Colonic mucosa (tissue), 4 donors: ENCODE measurements at regions of chr5 and their contacts with region 1.

Region 1: GRCh38 chr5:168987543-168988300 is 313.2 kb downstream of the SLIT3 start:
- DNase-seq: peak; percentile 78
- H3K4me3 ChIP-seq: no peak overlapping the region
- H3K27ac ChIP-seq: no peak overlapping the region
- H3K4me1 ChIP-seq: no peaks in the 10 kb centered on the region
- H3K27me3 ChIP-seq: no peaks in the 10 kb centered on the region
- CTCF ChIP-seq: peak; percentile 81

Region 2: DNA sequence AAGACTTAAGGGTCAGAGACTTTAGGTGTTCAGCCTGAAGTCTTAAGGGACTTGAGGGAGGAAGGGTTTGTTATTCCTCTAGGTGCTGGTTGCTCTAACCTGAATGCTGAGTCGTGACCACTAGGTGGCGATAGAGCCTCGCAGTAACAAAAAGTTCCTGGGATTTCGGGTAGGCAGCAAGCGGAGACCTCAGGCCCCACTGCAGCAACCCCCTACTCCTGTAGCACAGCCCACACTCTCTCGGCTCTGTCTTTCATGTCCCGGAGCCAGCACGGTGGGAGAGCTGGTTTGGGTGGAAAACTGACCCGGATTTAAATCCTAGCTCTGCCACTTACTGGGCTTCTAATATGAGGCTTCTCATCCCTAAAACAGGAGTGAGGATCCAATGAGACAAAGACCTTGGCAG is 308.2 kb before region 1 on chr5:
- intact Hi-C with region 1: no loop called
- DNase-seq: peak; percentile 81
- H3K4me3 ChIP-seq: no peak overlapping the region
- H3K27ac ChIP-seq: no peak overlapping the region
- H3K4me1 ChIP-seq: no peaks in the 10 kb centered on the region
- H3K27me3 ChIP-seq: no peaks in the 10 kb centered on the region
- CTCF ChIP-seq: peak; percentile 92

Region 3: GRCh38 chr5:168747987-168748777 is 239.5 kb before region 1 on chr5:
- intact Hi-C with region 1: no loop called
- DNase-seq: peak; percentile 45
- H3K4me3 ChIP-seq: no peak overlapping the region
- H3K27ac ChIP-seq: no peak overlapping the region
- H3K4me1 ChIP-seq: no peaks in the 10 kb centered on the region
- H3K27me3 ChIP-seq: no peaks in the 10 kb centered on the region
- CTCF ChIP-seq: peak; percentile 54

Region 4: DNA sequence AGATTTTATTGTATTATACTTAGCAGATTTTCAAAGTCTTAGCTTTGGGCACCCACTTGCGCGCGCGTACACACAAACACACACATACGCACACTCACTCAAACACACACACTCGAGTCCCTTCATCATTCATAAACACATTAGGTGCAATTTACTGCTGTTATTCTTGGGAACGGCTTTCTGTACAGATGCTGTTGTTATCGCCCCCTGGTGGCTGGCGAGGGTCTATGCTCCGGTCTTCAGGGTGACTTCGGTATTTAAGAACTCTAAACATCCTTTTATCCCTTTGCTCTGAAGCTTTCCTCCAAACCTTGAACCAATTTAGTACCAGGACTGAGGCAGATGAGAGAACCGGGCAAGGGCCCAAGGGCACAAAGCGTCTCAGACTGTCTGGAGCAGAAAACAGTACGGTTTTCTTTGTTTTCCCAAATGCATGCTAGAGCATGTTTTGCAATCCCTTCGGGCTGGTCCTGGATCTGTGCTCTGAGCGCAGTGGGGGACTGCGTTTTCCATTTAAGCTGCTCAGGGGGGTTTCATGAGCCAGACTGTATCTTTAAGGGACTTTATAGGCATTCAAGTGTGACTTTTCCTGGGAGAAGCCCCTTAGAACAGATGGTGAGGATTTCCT is 314.9 kb after region 1 on chr5:
- intact Hi-C with region 1: loop called (anchors 2 kb)
- DNase-seq: peak; percentile 75
- H3K4me3 ChIP-seq: no peak overlapping the region
- H3K27ac ChIP-seq: no peak overlapping the region
- H3K4me1 ChIP-seq: no peaks in the 10 kb centered on the region
- H3K27me3 ChIP-seq: peaks cover 20% of the 10 kb centered on the region
- CTCF ChIP-seq: peak; percentile 88

Region 5: DNA sequence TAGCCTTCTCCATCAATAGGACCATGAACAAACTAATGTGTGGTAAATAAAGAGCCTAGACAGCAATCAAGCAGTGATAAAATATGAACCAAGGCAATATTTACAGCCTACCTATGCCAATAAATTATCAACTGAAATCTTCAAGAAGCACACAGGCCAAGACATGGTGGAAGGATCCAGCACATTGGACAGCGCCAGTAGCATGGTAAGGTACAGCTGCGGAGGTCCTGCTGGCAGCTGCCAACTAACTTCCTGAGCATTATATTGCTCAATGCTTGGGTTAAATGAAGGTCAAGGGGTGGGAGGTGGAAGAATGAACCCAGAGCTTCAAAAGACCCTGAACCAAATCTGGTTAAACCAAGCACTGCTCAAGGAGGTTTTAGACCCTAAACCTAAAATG is 579.4 kb after region 1 on chr5:
- intact Hi-C with region 1: loop called (anchors 10 kb)
- DNase-seq: no peak
- H3K4me3 ChIP-seq: no peak overlapping the region
- H3K27ac ChIP-seq: no peak overlapping the region
- H3K4me1 ChIP-seq: no peaks in the 10 kb centered on the region
- H3K27me3 ChIP-seq: no peaks in the 10 kb centered on the region
- CTCF ChIP-seq: no peak

Region 6: DNA sequence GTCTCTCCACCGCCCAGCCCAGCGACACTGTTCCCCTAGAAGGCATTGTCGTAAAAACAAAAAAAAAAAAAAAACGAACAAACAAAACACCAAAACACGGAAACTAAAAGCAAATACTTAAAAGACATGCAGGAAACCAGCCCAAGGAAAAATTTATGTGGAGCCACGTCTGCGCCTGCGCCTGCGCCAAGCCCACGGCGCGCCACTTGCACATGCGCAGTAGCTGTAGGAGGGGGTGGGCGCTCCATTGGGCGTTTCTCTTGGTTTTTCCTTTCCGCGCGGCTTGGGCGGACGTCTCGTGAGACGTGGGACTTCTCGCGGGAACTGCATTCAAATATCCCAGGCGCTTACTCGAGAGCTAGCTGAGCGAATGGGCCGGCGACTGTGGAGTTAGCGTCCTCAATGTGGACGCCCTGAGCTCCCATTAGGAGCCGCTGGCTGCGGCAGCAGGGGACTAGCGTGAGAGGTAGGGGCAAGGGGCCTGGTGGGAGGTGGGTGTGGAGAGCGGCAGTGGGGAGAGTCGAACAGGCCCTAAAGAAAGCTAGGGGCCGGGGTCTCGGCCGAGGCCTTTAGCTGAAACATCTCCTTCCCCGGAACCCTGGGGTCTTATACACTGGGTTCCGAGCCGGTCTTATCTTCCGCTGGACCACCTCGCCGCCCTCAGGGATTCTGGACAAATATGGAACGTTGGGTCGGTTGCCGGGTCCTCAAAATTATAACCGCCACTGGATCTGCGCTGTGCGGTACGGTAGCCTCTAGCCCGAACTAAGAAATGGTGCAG is 595.9 kb after region 1 on chr5 and contains the start of gene SPDL1:
- intact Hi-C with region 1: loop called (anchors 2 kb)
- DNase-seq: peak; percentile 97
- H3K4me3 ChIP-seq: peak within 1 kb of the TSS; percentile 86
- H3K27ac ChIP-seq: peak within 1 kb of the TSS; percentile 58
- H3K4me1 ChIP-seq: no peaks in the 10 kb centered on the region
- H3K27me3 ChIP-seq: no peaks in the 10 kb centered on the region
- CTCF ChIP-seq: no peak
- total RNA-seq, gene SPDL1: 8.0 to 13.7 TPM